ENCODE measurements at regions of chr1 and their contacts with region 1.

Region 1: GRCh38 chr1:46340404-46341221 is at the start of gene NSUN4:
- DNase-seq: peak; percentile 91
- H3K4me3 ChIP-seq: peak within 1 kb of the TSS; percentile 58 to 79 (median 59)
- H3K27ac ChIP-seq: peak within 1 kb of the TSS; percentile 81
- H3K4me1 ChIP-seq: peaks cover 6% of the 10 kb centered on the region
- H3K27me3 ChIP-seq: no peaks in the 10 kb centered on the region
- CTCF ChIP-seq: peak; percentile 51 to 72
- total RNA-seq, gene NSUN4: 28.2 to 29.0 TPM

Region 2: DNA sequence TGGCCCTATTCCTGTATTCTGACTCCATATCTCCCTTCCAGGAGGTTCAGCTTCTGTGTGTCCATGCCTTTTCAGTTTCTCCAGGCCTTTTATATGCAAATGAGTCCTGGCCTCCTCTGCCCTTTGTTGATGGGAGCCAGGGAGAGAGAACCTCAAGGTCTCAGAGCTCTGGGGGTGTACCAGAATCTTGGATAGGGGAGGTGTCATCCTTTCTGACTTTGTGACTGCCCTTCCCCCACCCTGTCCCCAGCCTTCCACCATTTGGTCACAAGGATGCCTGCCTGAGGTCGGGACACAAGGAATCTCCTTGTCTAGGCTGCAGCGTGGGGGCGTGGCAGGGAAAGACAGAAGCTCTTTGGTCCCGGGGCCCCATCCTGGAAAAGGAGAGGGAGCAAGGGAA is 118.9 kb before region 1 on chr1:
- CTCF ChIA-PET with region 1: no interaction called
- dilution Hi-C with region 1: no loop called
- in situ Hi-C with region 1: no loop called
- intact Hi-C with region 1: no loop called
- DNase-seq: no peak
- H3K4me3 ChIP-seq: no peak overlapping the region
- H3K27ac ChIP-seq: no peak overlapping the region
- H3K4me1 ChIP-seq: peaks cover 24% of the 10 kb centered on the region
- H3K27me3 ChIP-seq: no peaks in the 10 kb centered on the region
- CTCF ChIP-seq: no peak

Region 3: DNA sequence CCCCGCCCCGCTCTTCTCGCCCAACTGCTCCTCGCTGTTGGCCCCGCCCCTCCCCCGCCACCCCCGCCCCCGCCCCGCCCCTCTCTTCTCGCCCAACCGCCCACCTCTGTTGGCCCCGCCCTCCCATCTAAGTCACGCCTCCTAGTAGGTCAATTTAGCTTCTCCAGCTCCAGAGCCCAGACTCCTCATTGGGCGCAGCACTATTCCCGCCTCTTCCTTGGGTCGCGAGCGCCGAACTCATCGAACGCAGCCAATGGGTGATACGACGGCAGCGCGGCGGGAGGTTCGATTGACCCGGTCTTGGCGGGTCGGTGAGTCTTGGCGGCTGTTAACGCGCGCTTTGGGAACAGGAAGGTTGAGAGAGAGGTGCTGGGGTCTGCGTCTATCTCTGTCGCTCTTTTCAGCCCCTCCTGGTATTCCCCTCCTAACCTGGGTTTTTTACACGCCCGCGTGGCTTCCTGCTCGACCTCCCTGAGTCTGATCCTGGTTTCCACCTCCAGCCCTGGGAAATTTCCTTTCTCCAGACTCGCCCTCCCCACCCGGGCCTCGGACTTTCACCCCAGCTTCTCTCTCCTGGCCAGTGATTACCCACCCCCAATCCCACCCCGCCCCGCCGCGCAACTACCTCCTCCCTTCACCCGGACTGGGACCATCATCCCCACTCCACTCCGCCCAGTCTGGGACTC is 93.0 kb before region 1 on chr1 and contains the start of gene RAD54L:
- CTCF ChIA-PET with region 1: no interaction called
- dilution Hi-C with region 1: no loop called
- in situ Hi-C with region 1: no loop called
- intact Hi-C with region 1: loop called (anchors 2 kb)
- DNase-seq: peak; percentile 99
- H3K4me3 ChIP-seq: peak within 1 kb of the TSS; percentile 75 to 88 (median 81)
- H3K27ac ChIP-seq: peak within 1 kb of the TSS; percentile 73
- H3K4me1 ChIP-seq: peaks cover 16% of the 10 kb centered on the region
- H3K27me3 ChIP-seq: no peaks in the 10 kb centered on the region
- CTCF ChIP-seq: no peak
- total RNA-seq, gene RAD54L: 1.2 to 14.3 TPM

Region 4: GRCh38 chr1:46303038-46303871 is 37.4 kb before region 1 on chr1 and contains the starts of genes LRRC41 and UQCRH:
- CTCF ChIA-PET with region 1: no interaction called
- dilution Hi-C with region 1: loop called (anchors 5 kb)
- in situ Hi-C with region 1: no loop called
- intact Hi-C with region 1: loop called (anchors 2 kb)
- DNase-seq: peak; percentile 93
- H3K4me3 ChIP-seq: peak within 1 kb of the TSS; percentile 69 to 98 (median 94)
- H3K27ac ChIP-seq: peak within 1 kb of the TSS; percentile 92
- H3K4me1 ChIP-seq: peaks cover 24% of the 10 kb centered on the region
- H3K27me3 ChIP-seq: no peaks in the 10 kb centered on the region
- CTCF ChIP-seq: no peak
- total RNA-seq, gene LRRC41: 76.7 to 103 TPM
- total RNA-seq, gene UQCRH: 233 to 275 TPM

Region 5: GRCh38 chr1:46352363-46352762 is 11.8 kb after region 1 on chr1:
- CTCF ChIA-PET with region 1: interaction called, 22 read pairs
- dilution Hi-C with region 1: no loop called
- in situ Hi-C with region 1: no loop called
- intact Hi-C with region 1: no loop called
- DNase-seq: no peak
- H3K4me3 ChIP-seq: no peak overlapping the region
- H3K27ac ChIP-seq: no peak overlapping the region
- H3K4me1 ChIP-seq: peaks cover 4% of the 10 kb centered on the region
- H3K27me3 ChIP-seq: no peaks in the 10 kb centered on the region
- CTCF ChIP-seq: no peak

Region 6: DNA sequence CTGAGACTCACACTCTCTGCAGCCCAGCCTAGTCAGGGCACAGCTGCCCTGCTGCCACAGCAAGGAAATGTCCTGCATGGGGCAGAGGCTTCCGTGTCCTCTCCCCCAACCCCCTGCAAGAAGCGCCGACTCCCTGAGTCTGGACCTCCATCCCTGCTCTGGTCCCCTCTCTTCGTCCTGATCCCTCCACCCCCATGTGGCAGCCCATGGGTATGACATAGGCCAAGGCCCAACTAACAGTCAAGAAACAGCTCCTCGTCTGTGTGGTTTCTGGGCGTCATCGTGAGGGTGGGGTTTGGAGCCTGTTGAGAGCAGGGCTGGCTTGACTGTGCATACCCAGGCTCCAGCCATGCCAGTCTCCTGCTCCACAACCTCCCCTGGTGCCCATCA is 73.0 kb after region 1 on chr1:
- CTCF ChIA-PET with region 1: no interaction called
- dilution Hi-C with region 1: no loop called
- in situ Hi-C with region 1: no loop called
- intact Hi-C with region 1: no loop called
- DNase-seq: no peak
- H3K4me3 ChIP-seq: no peak overlapping the region
- H3K27ac ChIP-seq: no peak overlapping the region
- H3K4me1 ChIP-seq: no peaks in the 10 kb centered on the region
- H3K27me3 ChIP-seq: no peaks in the 10 kb centered on the region
- CTCF ChIP-seq: peak; percentile 21 to 29